ENCODE measurements at regions of chr6 and their contacts with region 1.

Region 1: DNA sequence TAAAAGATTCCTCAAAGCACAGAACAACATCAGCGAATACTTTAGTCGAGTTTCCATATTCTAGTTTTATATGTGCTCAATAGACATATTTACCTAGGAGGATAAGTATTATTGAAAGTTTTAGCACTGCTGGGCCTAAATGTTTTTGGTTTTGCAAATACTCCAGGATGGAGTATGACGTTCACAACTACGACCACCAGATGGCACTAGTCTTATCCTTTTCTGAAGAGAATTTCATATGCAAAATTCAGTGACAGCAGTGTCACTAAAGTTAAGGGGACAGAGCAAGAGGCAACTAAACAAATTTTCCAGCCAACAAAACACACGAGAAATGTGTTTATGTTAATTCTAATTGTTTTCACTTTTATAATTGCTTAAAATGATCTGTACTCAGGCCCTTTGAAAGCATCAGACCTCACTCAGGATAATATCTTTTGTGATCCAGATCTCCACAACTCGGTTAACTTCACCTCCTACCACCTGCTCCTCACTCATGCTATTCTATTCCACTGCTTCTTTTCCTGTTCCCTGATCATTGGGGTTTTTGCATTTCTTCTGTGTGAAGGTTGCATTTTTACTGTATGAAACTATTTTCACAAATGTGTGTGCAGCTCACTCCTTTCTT is 220.8 kb downstream of the TRDN start:
- DNase-seq: peak; percentile 50
- ATAC-seq: peak; percentile 65; the same call in 1 of the 2 replicates
- H3K4me3 ChIP-seq: no peak overlapping the region
- H3K27ac ChIP-seq: no peak overlapping the region
- H3K4me1 ChIP-seq: no peaks in the 10 kb centered on the region
- H3K27me3 ChIP-seq: peaks cover 31% of the 10 kb centered on the region
- CTCF ChIP-seq: peak; percentile 39 to 70 (median 62); a peak in 5 of 6 replicates
- POLR2A ChIP-seq: no peak
- RAD21 ChIP-seq: peak; percentile 58

Region 2: GRCh38 chr6:123430970-123431369 is 15.0 kb after region 1 on chr6:
- CTCF ChIA-PET with region 1: no interaction called
- POLR2A ChIA-PET with region 1: no interaction called
- RAD21 ChIA-PET with region 1: no interaction called
- intact Hi-C with region 1: no loop called
- DNase-seq: no peak
- ATAC-seq: no peak
- H3K4me3 ChIP-seq: no peak overlapping the region
- H3K27ac ChIP-seq: no peak overlapping the region
- H3K4me1 ChIP-seq: no peaks in the 10 kb centered on the region
- H3K27me3 ChIP-seq: peaks cover 14% of the 10 kb centered on the region
- CTCF ChIP-seq: no peak
- POLR2A ChIP-seq: no peak
- RAD21 ChIP-seq: no peak

Region 3: GRCh38 chr6:124795643-124796463 is 1379.9 kb after region 1 on chr6:
- CTCF ChIA-PET with region 1: no interaction called
- POLR2A ChIA-PET with region 1: no interaction called
- RAD21 ChIA-PET with region 1: no interaction called
- intact Hi-C with region 1: loop called (anchors 5 kb)
- DNase-seq: no peak
- ATAC-seq: peak; percentile 78
- H3K4me3 ChIP-seq: no peak overlapping the region
- H3K27ac ChIP-seq: no peak overlapping the region
- H3K4me1 ChIP-seq: no peaks in the 10 kb centered on the region
- H3K27me3 ChIP-seq: peaks cover 72% of the 10 kb centered on the region
- CTCF ChIP-seq: peak; percentile 21 to 53 (median 51); a peak in 5 of 6 replicates
- POLR2A ChIP-seq: no peak
- RAD21 ChIP-seq: peak; percentile 58

Region 4: DNA sequence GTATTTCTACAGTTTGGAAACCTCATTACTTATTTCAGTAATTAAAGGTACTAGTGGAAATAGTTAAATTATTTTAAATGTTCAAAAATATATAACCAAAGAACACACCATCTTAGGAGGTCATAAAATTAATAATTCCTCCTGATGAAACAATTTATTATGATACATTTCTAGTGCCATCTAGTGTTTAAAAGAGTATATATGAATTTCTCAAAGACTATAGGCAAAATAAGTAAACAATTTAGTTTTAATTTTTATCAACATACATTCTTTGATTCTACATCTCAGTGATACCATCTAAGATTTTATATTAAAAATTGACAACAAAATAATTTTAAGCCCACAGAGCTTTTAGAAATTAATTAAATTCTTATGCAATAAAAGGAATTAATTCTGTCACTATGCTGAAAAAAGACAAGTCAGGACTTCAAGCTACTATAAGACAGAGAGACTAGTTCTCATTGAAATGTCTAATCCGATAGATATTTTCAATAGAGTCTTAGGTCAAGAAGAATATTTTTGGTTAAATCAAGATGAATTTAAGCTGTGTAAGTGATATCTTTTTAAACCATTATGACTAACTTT is 1438.5 kb after region 1 on chr6:
- CTCF ChIA-PET with region 1: no interaction called
- POLR2A ChIA-PET with region 1: no interaction called
- RAD21 ChIA-PET with region 1: no interaction called
- intact Hi-C with region 1: loop called (anchors 5 kb)
- DNase-seq: no peak
- ATAC-seq: no peak
- H3K4me3 ChIP-seq: no peak overlapping the region
- H3K27ac ChIP-seq: no peak overlapping the region
- H3K4me1 ChIP-seq: no peaks in the 10 kb centered on the region
- H3K27me3 ChIP-seq: no peaks in the 10 kb centered on the region
- CTCF ChIP-seq: peak in 2 of 3 experiments; percentile 20 to 35; a peak in 2 of 6 replicates
- POLR2A ChIP-seq: no peak
- RAD21 ChIP-seq: peak; percentile 44